Right cardiac atrium (tissue), 5 donors: ENCODE measurements at regions of chr9 and their contacts with region 1.

Region 1: GRCh38 chr9:90722071-90722470 is 79.4 kb upstream of the DIRAS2 start:
- DNase-seq: no peak
- ATAC-seq: no peak
- H3K4me3 ChIP-seq: no peak overlapping the region
- H3K27ac ChIP-seq: no peak overlapping the region
- H3K4me1 ChIP-seq: no peaks in the 10 kb centered on the region
- H3K27me3 ChIP-seq: no peaks in the 10 kb centered on the region

Region 2: DNA sequence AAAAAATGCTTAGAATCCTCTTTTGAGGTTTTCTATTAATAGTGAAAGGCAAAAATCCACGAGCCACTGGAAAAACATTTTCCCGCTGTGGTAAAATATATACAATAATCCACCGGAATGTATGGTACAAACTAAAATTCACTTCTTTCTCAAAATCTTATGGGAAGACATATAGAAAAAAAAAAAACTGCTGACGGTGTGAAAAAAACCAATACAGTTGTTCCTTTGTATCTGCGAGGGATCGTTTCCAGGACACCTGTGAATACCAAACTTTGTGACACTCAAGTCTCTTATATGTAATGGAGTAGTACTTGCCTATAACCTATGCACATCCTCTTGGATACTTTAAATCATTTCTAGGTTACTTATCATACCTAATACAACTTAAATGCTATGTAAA is 92.7 kb before region 1 on chr9:
- intact Hi-C with region 1: no loop called
- DNase-seq: no peak
- ATAC-seq: no peak
- H3K4me3 ChIP-seq: no peak overlapping the region
- H3K27ac ChIP-seq: no peak overlapping the region
- H3K4me1 ChIP-seq: no peaks in the 10 kb centered on the region
- H3K27me3 ChIP-seq: no peaks in the 10 kb centered on the region

Region 3: GRCh38 chr9:90783552-90783951 is 61.5 kb after region 1 on chr9:
- intact Hi-C with region 1: loop called in 1 of 4 experiments (anchors 2 kb)
- DNase-seq: no peak
- ATAC-seq: no peak
- H3K4me3 ChIP-seq: no peak overlapping the region
- H3K27ac ChIP-seq: no peak overlapping the region
- H3K4me1 ChIP-seq: no peaks in the 10 kb centered on the region
- H3K27me3 ChIP-seq: no peaks in the 10 kb centered on the region